ENCODE measurements at regions of chr10 and their contacts with region 1.

Region 1: GRCh38 chr10:7818295-7819122 is at the start of gene TAF3:
- DNase-seq: peak; percentile 96
- ATAC-seq: peak; percentile 89
- H3K4me3 Mint-ChIP-seq: peak within 1 kb of the TSS; percentile 88
- H3K27ac Mint-ChIP-seq: peak within 1 kb of the TSS; percentile 83
- H3K4me1 Mint-ChIP-seq: peaks cover 25% of the 10 kb centered on the region
- H3K27me3 Mint-ChIP-seq: peaks cover 3% of the 10 kb centered on the region
- total RNA-seq, gene TAF3: 12.2 to 17.7 TPM

Region 2: GRCh38 chr10:7199152-7199760 is 619.3 kb before region 1 on chr10:
- CTCF ChIA-PET with region 1: no interaction called
- POLR2A ChIA-PET with region 1: no interaction called
- intact Hi-C with region 1: no loop called
- DNase-seq: no peak
- ATAC-seq: no peak
- H3K4me3 Mint-ChIP-seq: no peak overlapping the region
- H3K27ac Mint-ChIP-seq: peak overlapping the region; percentile 5
- H3K4me1 Mint-ChIP-seq: peaks cover 18% of the 10 kb centered on the region
- H3K27me3 Mint-ChIP-seq: no peaks in the 10 kb centered on the region

Region 3: DNA sequence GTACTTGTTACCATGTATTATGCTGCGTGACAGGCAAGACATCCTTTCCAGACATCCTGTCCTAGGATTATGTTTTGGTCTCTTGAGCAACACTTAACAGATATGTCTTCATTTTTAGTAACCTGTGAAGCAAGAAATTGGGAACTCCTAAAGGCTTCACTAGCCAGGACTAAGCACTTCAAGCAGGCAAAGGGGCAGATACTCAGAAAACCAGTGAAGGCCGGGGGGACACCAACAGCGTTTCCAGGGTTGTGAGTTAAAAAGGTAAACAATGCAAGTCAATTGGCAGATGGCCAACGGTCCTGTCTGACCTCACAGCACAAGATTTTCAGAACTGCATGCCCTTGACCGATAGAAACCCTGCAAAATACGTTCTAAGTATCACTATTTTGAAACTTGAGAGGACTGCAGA is 330.1 kb before region 1 on chr10:
- CTCF ChIA-PET with region 1: no interaction called
- POLR2A ChIA-PET with region 1: no interaction called
- intact Hi-C with region 1: loop called in 1 of 2 experiments (anchors 1 kb)
- DNase-seq: no peak
- ATAC-seq: no peak
- H3K4me3 Mint-ChIP-seq: no peak overlapping the region
- H3K27ac Mint-ChIP-seq: no peak overlapping the region
- H3K4me1 Mint-ChIP-seq: peaks cover 66% of the 10 kb centered on the region
- H3K27me3 Mint-ChIP-seq: no peaks in the 10 kb centered on the region

Region 4: GRCh38 chr10:7787857-7788638 is 30.5 kb before region 1 on chr10 and contains the starts of genes ATP5F1C and KIN:
- CTCF ChIA-PET with region 1: interaction called, 14 read pairs
- POLR2A ChIA-PET with region 1: interaction called, 26 read pairs
- intact Hi-C with region 1: loop called (anchors 1 kb)
- DNase-seq: peak; percentile 98
- ATAC-seq: peak; percentile 96
- H3K4me3 Mint-ChIP-seq: no peak within 1 kb of the TSS
- H3K27ac Mint-ChIP-seq: no peak within 1 kb of the TSS
- H3K4me1 Mint-ChIP-seq: peaks cover 54% of the 10 kb centered on the region
- H3K27me3 Mint-ChIP-seq: no peaks in the 10 kb centered on the region
- total RNA-seq, gene ATP5F1C: 317 to 396 TPM
- total RNA-seq, gene KIN: 15.0 to 15.1 TPM

Measured in activated CD4-positive, alpha-beta T cell treated with anti-CD3 and anti-CD28 coated beads for 36 hours (primary cell).